Ascending aorta (tissue), 2 donors: ENCODE measurements at regions of chr17 and their contacts with region 1.

Region 1: GRCh38 chr17:61399131-61400057 is at the start of gene TBX2:
- DNase-seq: peak; percentile 50 to 93
- H3K4me3 ChIP-seq: peak within 1 kb of the TSS; percentile 64 to 83
- H3K27ac ChIP-seq: peak within 1 kb of the TSS; percentile 92 to 94
- H3K4me1 ChIP-seq: peaks cover 0 to 15% of the 10 kb centered on the region in 2 donors
- H3K27me3 ChIP-seq: peaks cover 4% of the 10 kb centered on the region
- CTCF ChIP-seq: peak in 1 of 3 experiments; percentile 5
- total RNA-seq, gene TBX2: 100 TPM

Region 2: GRCh38 chr17:61251939-61252896 is 147.2 kb before region 1 on chr17:
- intact Hi-C with region 1: loop called (anchors 2 kb)
- DNase-seq: peak; percentile 90 to 99
- H3K4me3 ChIP-seq: no peak overlapping the region
- H3K27ac ChIP-seq: peak overlapping the region; percentile 73 to 91
- H3K4me1 ChIP-seq: peaks cover 6 to 55% of the 10 kb centered on the region in 2 donors
- H3K27me3 ChIP-seq: no peaks in the 10 kb centered on the region
- CTCF ChIP-seq: no peak

Region 3: GRCh38 chr17:61314368-61315078 is 84.9 kb before region 1 on chr17:
- intact Hi-C with region 1: loop called (anchors 5 kb)
- DNase-seq: peak; percentile 25 to 87
- H3K4me3 ChIP-seq: peak overlapping the region in 1 of 2 donors; percentile 27
- H3K27ac ChIP-seq: peak overlapping the region; percentile 77 to 88
- H3K4me1 ChIP-seq: peaks cover 6 to 16% of the 10 kb centered on the region in 2 donors
- H3K27me3 ChIP-seq: no peaks in the 10 kb centered on the region
- CTCF ChIP-seq: peak in 1 of 3 experiments; percentile 19

Region 4: GRCh38 chr17:61383689-61384201 is 15.6 kb before region 1 on chr17:
- intact Hi-C with region 1: no loop called
- DNase-seq: no peak
- H3K4me3 ChIP-seq: no peak overlapping the region
- H3K27ac ChIP-seq: no peak overlapping the region
- H3K4me1 ChIP-seq: no peaks in the 10 kb centered on the region
- H3K27me3 ChIP-seq: no peaks in the 10 kb centered on the region
- CTCF ChIP-seq: no peak

Region 5: DNA sequence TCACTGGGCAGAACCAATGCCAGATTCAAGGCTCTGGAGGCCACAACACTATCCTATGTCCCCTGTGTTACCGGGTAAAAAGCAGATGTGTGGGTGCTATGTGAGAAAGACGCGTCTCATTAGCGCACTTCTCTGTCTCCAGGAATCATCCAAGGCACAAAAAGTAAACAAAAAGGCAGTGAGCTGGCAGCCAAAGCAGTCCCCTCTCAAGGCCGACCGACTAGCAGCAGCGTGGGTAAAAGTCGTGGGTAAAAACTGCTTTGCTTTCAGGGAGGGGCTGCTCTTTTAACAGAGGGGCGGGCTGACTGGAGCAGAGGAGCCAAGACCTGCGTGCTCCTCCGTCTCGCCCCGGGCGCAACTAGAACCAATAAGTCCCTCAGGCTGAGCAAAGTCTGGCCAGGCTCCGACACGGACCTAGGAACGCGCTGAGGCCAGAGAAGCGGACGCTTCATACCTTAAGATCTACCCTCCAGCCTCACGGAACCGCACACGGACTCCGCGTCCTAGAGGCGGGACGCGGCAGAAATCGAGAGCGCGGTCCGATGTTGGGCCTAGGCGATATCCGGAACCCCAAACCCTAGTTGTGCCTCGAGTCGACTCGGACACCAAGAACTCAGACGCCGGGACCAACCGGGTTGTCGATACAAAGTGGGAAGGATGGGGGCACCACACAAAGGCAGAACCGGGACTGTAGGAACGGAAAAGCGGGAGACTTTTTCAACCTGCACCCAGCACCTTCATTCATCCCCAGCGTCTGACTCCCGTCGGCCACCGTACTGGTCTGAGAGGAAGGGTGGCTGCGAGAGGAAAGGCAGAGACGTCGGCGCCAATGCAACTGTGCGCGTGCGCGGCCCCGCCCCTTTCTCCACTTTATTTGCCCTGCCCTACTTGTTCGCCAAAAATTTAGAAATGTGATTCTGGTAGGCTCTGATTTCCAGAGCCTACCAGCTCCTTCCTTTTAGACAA is 528.1 kb after region 1 on chr17 and contains the start of gene INTS2:
- intact Hi-C with region 1: loop called (anchors 5 kb)
- DNase-seq: peak; percentile 82 to 98
- H3K4me3 ChIP-seq: peak within 1 kb of the TSS; percentile 80 to 85
- H3K27ac ChIP-seq: peak within 1 kb of the TSS; percentile 90 to 93
- H3K4me1 ChIP-seq: peaks cover 0 to 9% of the 10 kb centered on the region in 2 donors
- H3K27me3 ChIP-seq: no peaks in the 10 kb centered on the region
- CTCF ChIP-seq: no peak
- total RNA-seq, gene INTS2: 2.2 TPM